PC-9 (cell line): ENCODE measurements at regions of chr19 and their contacts with region 1.

Region 1: DNA sequence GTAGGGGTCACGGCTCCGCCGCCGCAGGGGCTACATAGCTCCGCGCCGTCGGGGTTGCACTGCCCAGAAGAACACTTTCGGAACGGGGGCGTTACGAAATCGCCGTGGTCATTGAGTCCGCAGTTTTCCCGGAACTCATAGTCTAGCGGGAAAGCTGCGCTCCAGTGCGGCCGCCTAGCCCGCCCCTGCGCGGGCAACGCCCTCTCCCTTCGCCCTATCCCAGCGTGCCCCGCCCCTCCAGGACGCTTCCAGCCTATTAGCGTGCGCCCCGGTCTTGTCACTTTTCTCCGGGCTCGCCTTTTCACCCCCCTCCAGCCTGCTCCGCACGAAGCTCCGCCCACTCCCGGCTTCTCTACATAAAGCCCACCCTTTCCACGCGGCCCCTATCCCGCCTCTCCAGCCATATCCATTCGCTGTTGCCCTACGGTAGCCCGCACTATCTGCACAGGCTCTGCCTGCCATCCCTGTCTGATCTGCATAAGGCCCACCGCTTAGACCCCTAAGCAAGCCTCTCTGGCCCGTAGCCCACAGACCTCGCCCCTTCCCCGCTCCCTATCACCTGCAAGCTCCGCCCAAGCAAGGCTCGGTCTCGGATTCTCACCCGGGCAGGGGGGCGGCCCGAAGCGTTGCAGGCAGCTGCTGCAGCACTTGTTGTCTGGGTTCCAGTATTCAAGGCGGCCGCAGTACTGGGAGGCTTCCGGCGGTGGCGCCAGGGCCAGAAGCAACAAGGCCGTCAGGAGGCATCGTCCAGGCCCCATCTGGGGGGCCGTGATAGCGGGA is 1.6 kb downstream of the IGFLR1 start:
- DNase-seq: peak; percentile 86 to 96
- H3K4me3 ChIP-seq: peak overlapping the region; percentile 86
- H3K27ac ChIP-seq: no peak overlapping the region
- H3K4me1 ChIP-seq: peaks cover 10% of the 10 kb centered on the region; the same call in 1 of the 2 replicates
- H3K27me3 ChIP-seq: no peaks in the 10 kb centered on the region
- CTCF ChIP-seq: no peak; the same call in 1 of the 2 replicates

Region 2: GRCh38 chr19:35757749-35758608 is 17.4 kb after region 1 on chr19 and contains the start of gene PROSER3:
- CTCF ChIA-PET with region 1: no interaction called
- POLR2A ChIA-PET with region 1: no interaction called
- intact Hi-C with region 1: loop called (anchors 2 kb)
- DNase-seq: peak; percentile 98 to 99
- H3K4me3 ChIP-seq: peak within 1 kb of the TSS; percentile 67
- H3K27ac ChIP-seq: peak within 1 kb of the TSS; percentile 67
- H3K4me1 ChIP-seq: peaks cover 13% of the 10 kb centered on the region
- H3K27me3 ChIP-seq: no peaks in the 10 kb centered on the region
- CTCF ChIP-seq: no peak
- total RNA-seq, gene PROSER3: 38.0 and 52.2 TPM in 2 replicates

Region 3: GRCh38 chr19:35899547-35900214 is 159.1 kb after region 1 on chr19:
- CTCF ChIA-PET with region 1: no interaction called
- POLR2A ChIA-PET with region 1: interaction called, 27 read pairs
- intact Hi-C with region 1: loop called (anchors 10 kb)
- DNase-seq: peak; percentile 62 to 74
- H3K4me3 ChIP-seq: peak overlapping the region; percentile 79
- H3K27ac ChIP-seq: peak overlapping the region; percentile 50
- H3K4me1 ChIP-seq: peaks cover 8% of the 10 kb centered on the region; the same call in 1 of the 2 replicates
- H3K27me3 ChIP-seq: no peaks in the 10 kb centered on the region
- CTCF ChIP-seq: no peak

Region 4: DNA sequence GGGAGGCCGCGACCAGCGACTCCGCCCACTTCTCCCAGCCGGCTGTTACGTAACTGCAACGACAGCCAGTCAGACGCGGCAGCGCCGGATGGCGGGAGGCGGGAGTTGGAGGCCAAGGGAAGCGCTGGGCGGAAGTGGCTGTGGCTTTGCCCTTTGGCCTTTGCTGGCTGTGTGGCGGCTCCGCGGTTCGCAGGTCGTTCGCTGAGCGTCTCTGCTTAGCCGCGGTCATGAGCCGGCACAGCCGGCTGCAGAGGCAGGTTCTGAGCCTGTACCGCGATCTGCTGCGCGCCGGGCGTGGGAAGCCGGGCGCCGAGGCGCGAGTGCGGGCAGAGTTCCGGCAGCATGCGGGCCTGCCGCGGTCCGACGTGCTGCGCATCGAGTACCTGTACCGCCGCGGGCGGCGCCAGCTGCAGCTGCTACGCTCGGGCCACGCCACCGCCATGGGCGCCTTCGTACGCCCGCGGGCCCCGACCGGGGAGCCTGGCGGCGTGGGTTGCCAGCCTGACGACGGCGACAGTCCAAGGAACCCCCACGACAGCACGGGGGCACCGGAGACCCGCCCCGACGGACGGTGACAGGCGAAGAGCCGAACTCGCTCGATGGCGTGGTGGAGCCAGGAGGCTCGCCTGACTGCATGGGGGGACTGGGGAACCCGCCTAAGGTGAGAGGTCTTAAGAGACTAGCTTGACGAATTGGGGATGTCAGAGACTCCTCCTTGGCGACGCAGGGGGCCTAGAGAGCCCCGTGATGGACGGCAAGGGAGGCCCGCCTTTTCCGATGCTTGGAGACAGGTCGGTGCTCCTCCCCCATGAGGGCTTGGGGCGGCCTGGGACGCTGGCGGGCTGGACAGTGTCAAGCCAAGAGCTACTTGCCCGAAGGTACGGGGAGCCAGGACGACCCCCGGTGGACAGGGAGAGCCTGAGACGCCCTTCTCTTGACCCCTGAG is 254.7 kb after region 1 on chr19 and contains the start of gene SDHAF1:
- CTCF ChIA-PET with region 1: no interaction called
- POLR2A ChIA-PET with region 1: interaction called, 5 read pairs
- intact Hi-C with region 1: loop called (anchors 10 kb)
- DNase-seq: peak; percentile 86 to 93
- H3K4me3 ChIP-seq: peak within 1 kb of the TSS; percentile 97
- H3K27ac ChIP-seq: 0 out of 2 replicates have a peak within 1 kb of the TSS, but pooled peaks have one; percentile 23
- H3K4me1 ChIP-seq: peaks cover 8% of the 10 kb centered on the region; the same call in 1 of the 2 replicates
- H3K27me3 ChIP-seq: no peaks in the 10 kb centered on the region
- CTCF ChIP-seq: no peak
- total RNA-seq, gene SDHAF1: 16.9 and 22.4 TPM in 2 replicates